ENCODE measurements at regions of chr4 and their contacts with region 1.

Region 1: GRCh38 chr4:170990989-170991589 is 822.1 kb upstream of the GALNTL6 start:
- DNase-seq: peak; percentile 68 to 84 (median 78)
- H3K4me3 ChIP-seq: no peak overlapping the region
- H3K27ac ChIP-seq: no peak overlapping the region
- H3K4me1 ChIP-seq: peaks cover 0 to 6% (median 0%) of the 10 kb centered on the region in 4 experiments
- H3K27me3 ChIP-seq: no peaks in the 10 kb centered on the region

Region 2: GRCh38 chr4:171007618-171008390 is 16.7 kb after region 1 on chr4:
- CTCF ChIA-PET with region 1: no interaction called
- POLR2A ChIA-PET with region 1: no interaction called
- DNase-seq: peak in 1 of 3 donors; percentile 41
- H3K4me3 ChIP-seq: no peak overlapping the region
- H3K27ac ChIP-seq: no peak overlapping the region
- H3K4me1 ChIP-seq: peaks cover 0 to 3% (median 0%) of the 10 kb centered on the region in 4 experiments
- H3K27me3 ChIP-seq: no peaks in the 10 kb centered on the region

Region 3: DNA sequence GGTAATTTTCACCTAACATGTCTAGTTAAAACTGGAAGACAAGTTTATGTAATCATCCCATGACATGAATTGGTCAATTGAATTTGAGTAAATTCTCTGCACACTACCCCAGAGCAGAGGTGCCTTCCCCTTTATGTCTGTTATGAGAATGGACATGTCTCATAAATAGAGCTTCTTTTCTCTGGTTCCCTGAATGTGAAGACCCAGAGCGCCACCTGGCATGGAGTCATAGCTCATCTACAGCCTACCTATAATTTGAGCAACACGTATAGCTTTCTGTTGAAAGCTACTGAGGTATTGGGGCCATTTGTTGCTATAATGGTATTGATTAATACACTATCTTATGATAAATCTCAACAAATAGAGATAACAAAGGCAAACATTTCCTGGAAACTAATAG is 195.6 kb after region 1 on chr4:
- CTCF ChIA-PET with region 1: interaction called, 15 read pairs
- POLR2A ChIA-PET with region 1: no interaction called
- DNase-seq: peak; percentile 18 to 35 (median 29)
- H3K4me3 ChIP-seq: no peak overlapping the region
- H3K27ac ChIP-seq: no peak overlapping the region
- H3K4me1 ChIP-seq: no peaks in the 10 kb centered on the region
- H3K27me3 ChIP-seq: no peaks in the 10 kb centered on the region

Measured in common myeloid progenitor, CD34-positive (primary cell).